GM10248 (cell line): ENCODE measurements at regions of chr3 and their contacts with region 1.

Region 1: GRCh38 chr3:179801263-179801662 is 148.4 kb downstream of the USP13 start:
- DNase-seq: no peak
- CTCF ChIP-seq: no peak

Region 2: DNA sequence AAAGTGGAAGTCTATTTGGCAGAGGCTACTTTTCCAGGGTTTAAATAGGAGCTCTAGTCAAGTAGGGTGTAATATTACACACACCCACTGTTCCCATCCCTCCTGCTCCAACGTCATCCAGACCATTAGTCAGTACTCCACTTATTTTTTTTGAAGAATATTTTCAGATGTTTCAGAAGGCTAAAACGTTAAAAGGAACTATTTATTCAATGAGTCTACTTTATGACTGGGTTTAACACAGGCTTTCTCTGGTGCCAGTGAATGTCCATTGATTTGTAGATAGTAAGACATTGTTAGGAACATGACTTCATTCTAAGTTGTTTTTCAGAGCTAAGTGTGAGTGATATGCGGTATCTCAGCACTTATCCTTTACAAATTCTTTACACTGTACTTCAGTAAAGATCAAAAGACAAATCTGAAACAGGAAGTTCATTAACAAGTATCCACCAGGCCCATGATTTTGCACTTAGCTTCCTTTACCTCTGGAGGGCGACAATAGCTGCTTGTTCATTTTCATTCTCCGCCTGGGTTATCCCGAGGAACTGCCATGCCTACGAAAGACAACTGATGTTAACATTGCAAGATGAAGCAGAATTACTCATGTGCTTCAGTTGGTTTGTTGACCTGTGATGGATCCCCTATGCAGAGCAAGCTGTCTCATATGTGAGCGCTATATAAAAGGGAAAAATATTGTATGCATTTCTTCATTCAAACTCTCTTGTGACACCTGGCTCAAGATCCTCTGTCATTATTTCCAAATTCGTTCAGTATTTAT is 10.2 kb after region 1 on chr3:
- CTCF ChIA-PET with region 1: interaction called, 10 read pairs
- POLR2A ChIA-PET with region 1: no interaction called
- DNase-seq: peak; percentile 64
- CTCF ChIP-seq: peak; percentile 64

Region 3: GRCh38 chr3:180898572-180898971 is 1097.3 kb after region 1 on chr3:
- CTCF ChIA-PET with region 1: no interaction called
- POLR2A ChIA-PET with region 1: no interaction called
- DNase-seq: no peak
- CTCF ChIP-seq: no peak